Common myeloid progenitor, CD34-positive (primary cell): ENCODE measurements at regions of chr2 and their contacts with region 1.

Region 1: GRCh38 chr2:196247114-196247975 is 76.0 kb upstream of the STK17B start:
- DNase-seq: peak in 2 of 3 donors; percentile 60 to 63
- H3K4me3 ChIP-seq: no peak overlapping the region
- H3K27ac ChIP-seq: no peak overlapping the region
- H3K4me1 ChIP-seq: peaks cover 18 to 66% (median 31%) of the 10 kb centered on the region in 4 experiments
- H3K27me3 ChIP-seq: no peaks in the 10 kb centered on the region

Region 2: DNA sequence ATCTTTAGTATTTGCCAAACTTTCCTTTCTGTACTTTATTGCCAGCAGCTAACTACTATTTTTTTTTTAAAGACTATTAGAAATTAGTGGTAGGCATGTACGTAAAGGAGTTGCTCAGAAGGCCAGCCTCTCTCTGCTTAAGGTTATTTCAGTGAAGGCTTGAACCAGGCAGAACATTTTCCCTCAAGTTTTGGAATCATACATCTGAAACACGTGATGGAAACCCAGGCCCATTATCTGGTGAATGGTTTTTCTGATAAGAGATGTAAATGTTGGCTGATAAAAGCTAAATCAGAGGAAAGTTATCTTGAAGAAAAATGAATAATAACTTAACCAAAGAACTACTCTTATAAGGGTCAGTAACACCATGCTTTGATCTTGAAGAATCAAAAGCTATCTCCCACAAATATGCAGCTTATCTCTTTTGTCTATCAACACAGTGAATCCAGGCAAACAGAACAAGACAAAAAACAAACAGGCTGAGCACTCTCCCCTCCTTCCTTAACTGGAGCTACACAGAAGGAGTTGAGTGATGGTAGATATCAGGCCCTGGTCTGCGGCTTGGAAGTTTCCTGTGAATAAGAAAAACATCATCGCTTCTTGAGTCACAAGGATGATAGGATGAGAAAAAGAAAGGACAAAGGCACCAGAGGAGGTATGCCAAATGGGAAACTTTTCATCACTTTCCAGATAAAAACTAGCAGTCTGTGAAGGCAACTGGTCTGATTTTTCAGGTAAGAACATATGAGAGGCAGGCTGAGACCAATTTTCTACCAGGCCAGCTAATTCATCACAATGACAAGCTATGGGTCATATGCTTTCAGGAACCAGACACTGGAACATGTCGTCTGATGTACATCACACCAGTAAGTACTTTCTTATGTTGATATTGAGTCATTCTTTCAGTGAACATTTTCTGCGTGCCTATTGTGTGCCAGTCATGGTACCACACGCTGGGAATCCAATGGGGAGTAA is 12.4 kb after region 1 on chr2:
- CTCF ChIA-PET with region 1: interaction called, 26 read pairs
- POLR2A ChIA-PET with region 1: interaction called, 3 read pairs
- DNase-seq: peak; percentile 68 to 79 (median 73)
- H3K4me3 ChIP-seq: peak overlapping the region in 1 of 7 experiments; percentile 20
- H3K27ac ChIP-seq: peak overlapping the region in 1 of 2 experiments; percentile 49
- H3K4me1 ChIP-seq: peaks cover 36 to 53% (median 46%) of the 10 kb centered on the region in 4 experiments
- H3K27me3 ChIP-seq: no peaks in the 10 kb centered on the region

Region 3: GRCh38 chr2:196277002-196277401 is 29.7 kb after region 1 on chr2:
- CTCF ChIA-PET with region 1: interaction called, 16 read pairs
- POLR2A ChIA-PET with region 1: interaction called, 3 read pairs
- DNase-seq: peak; percentile 60 to 79 (median 77)
- H3K4me3 ChIP-seq: no peak overlapping the region
- H3K27ac ChIP-seq: no peak overlapping the region
- H3K4me1 ChIP-seq: peaks cover 11 to 29% (median 21%) of the 10 kb centered on the region in 4 experiments
- H3K27me3 ChIP-seq: no peaks in the 10 kb centered on the region